Right lobe of liver (tissue), 6 donors: ENCODE measurements at regions of chr14 and their contacts with region 1.

Region 1: DNA sequence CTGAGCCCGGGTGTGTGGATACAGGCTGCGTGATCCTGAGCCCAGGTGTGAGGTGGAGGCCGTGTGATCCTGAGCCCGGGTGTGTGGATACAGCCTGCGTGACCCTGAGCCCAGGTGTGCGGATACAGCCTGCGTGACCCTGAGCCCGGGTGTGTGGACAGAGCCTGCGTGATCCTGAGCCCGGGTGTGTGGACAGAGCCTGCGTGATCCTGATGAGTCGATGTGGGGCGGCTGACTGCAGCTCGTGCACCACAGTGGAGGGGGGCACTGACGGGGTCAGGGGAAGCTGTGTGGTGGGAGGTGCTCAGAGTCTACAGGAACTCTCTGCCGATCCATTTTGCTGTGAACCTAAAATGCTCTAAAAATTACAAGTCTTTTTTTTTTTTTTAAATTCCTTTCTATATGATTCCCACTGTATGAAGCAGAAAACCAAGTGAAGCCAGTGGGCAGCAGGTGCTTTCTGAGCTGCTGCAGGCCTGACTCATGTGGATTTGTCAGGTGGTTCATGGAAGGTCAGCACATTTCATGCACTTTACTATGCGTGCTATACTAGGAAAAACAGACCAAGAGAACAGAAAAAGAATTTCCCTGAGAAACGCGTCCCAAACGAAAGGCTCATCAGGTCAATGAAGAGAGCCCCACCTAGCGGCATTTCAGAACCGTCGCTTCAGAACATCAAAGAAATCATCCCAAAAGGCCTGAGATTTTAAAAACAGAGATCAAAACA is 19.3 kb downstream of the BRF1 start:
- DNase-seq: no peak
- ATAC-seq: peak; percentile 10 to 45 (median 34)
- H3K4me3 ChIP-seq: no peak overlapping the region
- H3K27ac ChIP-seq: no peak overlapping the region
- H3K4me1 ChIP-seq: peaks cover 0 to 27% (median 8%) of the 10 kb centered on the region in 4 donors
- H3K27me3 ChIP-seq: no peaks in the 10 kb centered on the region
- CTCF ChIP-seq: peak; percentile 42 to 63 (median 59)
- POLR2A ChIP-seq: no peak

Region 2: DNA sequence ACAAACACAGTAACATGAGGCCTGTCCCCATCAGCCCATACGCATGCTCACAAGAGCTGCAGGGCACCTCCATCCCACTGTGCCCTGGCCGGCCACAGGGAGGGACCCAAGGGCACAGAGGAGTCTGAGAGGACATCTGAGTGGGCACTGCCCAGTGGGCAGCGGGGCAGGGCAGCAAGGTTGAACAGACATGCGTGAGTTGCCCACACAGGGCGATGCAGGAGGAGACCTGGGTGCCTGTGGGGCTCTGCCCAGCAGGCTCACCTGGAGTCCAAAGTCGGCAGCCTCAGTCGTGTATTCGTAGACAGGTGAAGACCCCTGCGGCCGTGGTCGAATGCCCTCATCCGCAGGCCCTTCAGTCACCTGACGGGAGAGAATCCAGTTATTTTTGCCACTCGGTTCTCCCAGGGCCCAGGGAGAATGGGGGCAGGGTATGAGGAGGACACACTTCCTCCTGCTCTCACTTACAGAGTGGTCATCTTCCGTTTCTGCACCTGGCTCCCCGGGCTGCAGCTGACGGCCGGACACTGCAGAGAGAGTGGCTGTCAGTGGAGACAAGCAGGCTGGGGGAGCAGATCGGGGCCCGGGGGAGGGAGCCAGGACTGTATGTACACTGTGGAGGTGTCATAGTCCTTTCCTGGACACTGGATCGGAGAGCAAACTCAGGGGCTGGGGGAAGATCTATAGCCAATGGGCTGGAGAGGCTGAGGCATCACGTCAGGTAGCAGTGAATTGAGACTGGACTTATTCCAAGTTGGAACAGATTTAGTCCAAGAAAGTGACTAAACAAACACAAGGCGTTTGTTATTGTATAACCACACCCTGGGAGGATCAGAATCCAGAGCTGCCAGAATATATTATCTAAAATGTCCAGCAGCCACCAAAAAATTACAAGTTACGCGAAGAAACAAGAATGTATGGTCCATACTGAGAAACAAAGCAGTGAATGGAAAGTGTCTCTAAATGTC is 324.1 kb before region 1 on chr14:
- intact Hi-C with region 1: no loop called
- DNase-seq: peak in 1 of 3 donors; percentile 45
- ATAC-seq: no peak
- H3K4me3 ChIP-seq: no peak overlapping the region
- H3K27ac ChIP-seq: no peak overlapping the region
- H3K4me1 ChIP-seq: no peaks in the 10 kb centered on the region
- H3K27me3 ChIP-seq: peaks cover 0 to 8% of the 10 kb centered on the region in 2 donors
- CTCF ChIP-seq: no peak
- POLR2A ChIP-seq: no peak

Region 3: GRCh38 chr14:105086833-105087307 is 194.7 kb before region 1 on chr14:
- intact Hi-C with region 1: loop called in 1 of 2 experiments (anchors 10 kb)
- DNase-seq: peak; percentile 73 to 84 (median 81)
- ATAC-seq: peak; percentile 40 to 62 (median 58)
- H3K4me3 ChIP-seq: peak overlapping the region; percentile 12 to 32 (median 31)
- H3K27ac ChIP-seq: no peak overlapping the region
- H3K4me1 ChIP-seq: peaks cover 2 to 19% (median 10%) of the 10 kb centered on the region in 4 donors
- H3K27me3 ChIP-seq: peaks cover 0 to 9% of the 10 kb centered on the region in 2 donors
- CTCF ChIP-seq: peak; percentile 79 to 83 (median 80)
- POLR2A ChIP-seq: no peak

Region 4: GRCh38 chr14:105203057-105203531 is 78.4 kb before region 1 on chr14:
- intact Hi-C with region 1: loop called in 1 of 2 experiments (anchors 10 kb)
- DNase-seq: peak; percentile 75 to 83 (median 82)
- ATAC-seq: peak; percentile 46 to 58 (median 50)
- H3K4me3 ChIP-seq: no peak overlapping the region
- H3K27ac ChIP-seq: no peak overlapping the region
- H3K4me1 ChIP-seq: peaks cover 0 to 22% (median 8%) of the 10 kb centered on the region in 4 donors
- H3K27me3 ChIP-seq: no peaks in the 10 kb centered on the region
- CTCF ChIP-seq: peak; percentile 90 to 96 (median 93)
- POLR2A ChIP-seq: no peak

Region 5: GRCh38 chr14:105351920-105352851 is 70.7 kb after region 1 on chr14:
- intact Hi-C with region 1: loop called in 1 of 2 experiments (anchors 10 kb)
- DNase-seq: peak; percentile 82 to 91 (median 87)
- ATAC-seq: peak; percentile 95 to 99 (median 98)
- H3K4me3 ChIP-seq: no peak overlapping the region
- H3K27ac ChIP-seq: peak overlapping the region in 1 of 3 donors; percentile 26
- H3K4me1 ChIP-seq: peaks cover 0 to 6% (median 3%) of the 10 kb centered on the region in 4 donors
- H3K27me3 ChIP-seq: no peaks in the 10 kb centered on the region
- CTCF ChIP-seq: peak; percentile 86 to 94 (median 90)
- POLR2A ChIP-seq: no peak

Region 6: DNA sequence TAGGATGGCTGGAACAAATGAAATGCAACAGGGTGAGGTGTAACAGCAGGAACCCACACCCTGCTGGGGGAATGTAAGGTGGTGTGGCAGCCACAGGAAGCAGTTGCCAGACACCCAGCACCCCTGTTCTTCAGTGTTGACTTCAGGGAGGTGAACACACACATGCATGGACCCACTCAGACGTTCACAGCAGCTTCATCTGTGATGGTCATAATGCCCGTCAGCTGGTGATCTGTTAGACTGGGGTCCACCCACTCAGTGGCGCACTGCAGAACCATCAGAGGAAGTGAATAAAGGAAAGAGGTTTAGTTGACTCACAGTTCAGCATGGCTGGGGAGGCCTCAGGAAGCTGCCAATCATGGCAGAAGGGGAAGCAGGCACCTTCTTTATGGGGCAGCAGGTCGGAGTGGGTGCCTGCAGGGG is 94.1 kb after region 1 on chr14:
- intact Hi-C with region 1: no loop called
- DNase-seq: no peak
- ATAC-seq: no peak
- H3K4me3 ChIP-seq: no peak overlapping the region
- H3K27ac ChIP-seq: no peak overlapping the region
- H3K4me1 ChIP-seq: no peaks in the 10 kb centered on the region
- H3K27me3 ChIP-seq: no peaks in the 10 kb centered on the region
- CTCF ChIP-seq: no peak
- POLR2A ChIP-seq: no peak